GM13977 (cell line): ENCODE measurements at regions of chrX and their contacts with region 1.

Region 1: DNA sequence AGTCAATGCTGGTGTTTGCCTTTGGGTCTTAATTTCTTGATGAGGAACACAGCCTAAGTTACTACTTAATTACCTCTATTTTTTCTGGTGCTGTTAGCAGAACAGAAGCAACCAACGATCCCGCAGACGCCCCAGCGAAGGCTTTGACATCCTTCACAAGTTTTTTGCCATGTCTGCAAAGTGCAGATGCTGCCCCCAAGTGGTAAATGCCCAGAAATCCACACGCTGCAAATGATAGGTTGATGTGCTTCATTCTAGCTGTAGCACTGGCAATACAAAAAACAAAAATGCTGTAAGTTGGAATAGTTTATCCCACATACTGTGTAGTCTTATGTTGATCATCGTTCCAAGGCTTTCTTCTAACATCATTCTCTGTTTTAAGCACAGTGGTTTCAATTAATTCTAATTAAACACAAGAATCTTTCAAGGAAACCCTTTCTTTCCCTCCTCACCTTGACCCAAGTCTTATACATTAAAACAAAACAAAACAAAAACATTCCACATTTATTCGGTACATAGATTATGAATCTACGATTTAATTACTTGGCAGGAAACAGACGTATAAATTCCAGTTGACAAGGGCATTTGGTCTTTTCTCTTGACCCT is 1.2 kb downstream of the PNPLA4 start:
- DNase-seq: peak; percentile 67
- CTCF ChIP-seq: peak; percentile 88

Region 2: GRCh38 chrX:7110821-7111276 is 815.1 kb before region 1 on chrX:
- in situ Hi-C with region 1: loop called (anchors 25 kb)
- DNase-seq: no peak
- CTCF ChIP-seq: no peak